ENCODE measurements at regions of chr10 and their contacts with region 1.

Region 1: DNA sequence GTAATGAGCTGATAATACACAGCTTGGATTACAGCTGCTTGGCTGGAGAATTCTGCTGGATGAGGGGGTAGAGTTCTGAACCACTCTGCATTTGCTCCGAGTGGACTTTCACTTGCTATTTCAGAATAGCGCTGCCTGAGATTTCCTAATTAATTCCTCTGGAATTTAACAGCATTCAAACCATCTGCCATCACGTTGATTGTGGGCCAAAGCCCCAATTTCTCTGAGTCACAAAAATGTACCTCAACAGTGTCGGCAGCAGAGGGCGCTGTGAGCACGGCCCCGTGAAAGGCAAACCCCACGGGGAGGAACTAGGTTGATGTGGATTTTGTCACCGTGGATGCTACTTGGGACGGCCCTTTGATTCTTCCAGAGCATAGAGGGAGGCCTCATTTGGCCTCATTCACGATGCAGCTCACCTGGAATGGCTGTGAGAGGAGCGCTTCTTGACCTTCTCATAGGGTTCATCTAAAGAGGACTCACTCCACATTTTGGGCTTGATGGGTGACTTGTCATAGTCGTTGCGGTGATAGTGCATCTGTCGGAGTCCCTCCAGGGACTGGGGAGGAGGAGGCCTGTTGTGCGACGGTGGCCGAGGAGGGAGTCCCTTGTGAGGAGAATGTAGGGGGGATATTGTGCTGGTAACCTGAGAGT is 73.3 kb downstream of the PRPF18 start:
- DNase-seq: no peak
- H3K4me3 ChIP-seq: peak overlapping the region in 1 of 4 donors; percentile 26
- H3K27ac ChIP-seq: peak overlapping the region; percentile 32 to 77 (median 74)
- H3K4me1 ChIP-seq: peaks cover 18 to 38% (median 21%) of the 10 kb centered on the region in 3 donors
- H3K27me3 ChIP-seq: no peaks in the 10 kb centered on the region
- CTCF ChIP-seq: peak; percentile 87 to 97 (median 91)
- POLR2A ChIP-seq: no peak

Region 2: DNA sequence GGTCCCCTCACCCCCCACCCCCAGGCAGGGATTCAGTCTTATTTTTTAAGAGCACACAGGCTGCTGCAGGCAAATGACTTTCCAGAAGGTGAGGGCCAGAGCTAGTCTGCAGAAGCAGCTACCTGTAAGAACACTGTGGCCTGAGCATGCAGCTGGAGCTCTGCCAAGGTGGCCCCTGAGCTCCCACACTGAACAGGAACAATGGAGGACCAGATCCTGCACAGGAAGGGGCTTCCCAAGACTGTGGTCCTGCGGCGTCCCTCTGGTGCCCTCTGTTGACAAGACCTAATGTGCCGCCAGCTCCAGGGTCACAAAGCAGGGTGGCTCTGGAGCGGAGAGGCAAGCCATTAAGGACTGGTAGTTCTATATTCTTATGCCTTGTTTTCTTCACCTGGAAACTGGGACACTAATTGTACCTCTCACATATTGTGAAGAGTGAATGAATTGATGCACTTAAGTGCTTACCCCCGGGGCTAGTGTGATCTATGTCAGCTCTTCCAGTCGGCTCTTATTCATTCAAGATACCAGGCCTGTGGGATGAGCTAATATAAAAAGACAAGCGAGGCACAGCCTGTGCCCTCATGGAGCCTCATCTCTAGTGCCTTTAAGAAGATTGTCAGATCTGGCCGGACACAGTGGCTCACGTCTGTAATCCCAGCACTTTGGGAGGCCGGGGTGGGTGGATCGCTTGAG is 123.2 kb before region 1 on chr10:
- intact Hi-C with region 1: no loop called
- DNase-seq: no peak
- H3K4me3 ChIP-seq: no peak overlapping the region
- H3K27ac ChIP-seq: no peak overlapping the region
- H3K4me1 ChIP-seq: no peaks in the 10 kb centered on the region
- H3K27me3 ChIP-seq: peaks cover 0 to 27% (median 0%) of the 10 kb centered on the region in 4 donors
- CTCF ChIP-seq: peak in 5 of 6 experiments; percentile 16 to 43 (median 32)
- POLR2A ChIP-seq: no peak

Region 3: DNA sequence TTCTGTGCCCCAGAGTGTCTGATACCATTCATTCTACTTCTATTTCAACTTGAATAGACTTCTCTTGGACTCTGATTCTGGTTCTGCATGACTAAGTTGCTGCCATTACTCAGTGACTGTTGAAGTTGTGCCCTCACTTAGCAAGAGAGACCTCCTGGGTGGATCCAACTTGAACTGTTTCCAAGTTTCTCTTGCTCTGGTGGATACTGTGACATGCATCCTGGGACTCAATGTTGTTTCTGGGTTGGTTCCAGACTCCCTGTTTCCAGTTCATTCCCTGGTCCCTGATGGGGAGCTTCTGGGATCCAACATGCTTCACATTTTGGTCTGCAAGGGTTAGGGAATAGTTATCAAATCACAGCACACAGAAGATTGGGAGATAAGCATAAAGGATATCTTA is 99.4 kb before region 1 on chr10:
- intact Hi-C with region 1: no loop called
- DNase-seq: no peak
- H3K4me3 ChIP-seq: no peak overlapping the region
- H3K27ac ChIP-seq: no peak overlapping the region
- H3K4me1 ChIP-seq: peaks cover 0 to 19% (median 0%) of the 10 kb centered on the region in 3 donors
- H3K27me3 ChIP-seq: no peaks in the 10 kb centered on the region
- CTCF ChIP-seq: no peak
- POLR2A ChIP-seq: no peak

Region 4: GRCh38 chr10:13776861-13777311 is 116.9 kb after region 1 on chr10:
- intact Hi-C with region 1: loop called (anchors 5 kb)
- DNase-seq: no peak
- H3K4me3 ChIP-seq: no peak overlapping the region
- H3K27ac ChIP-seq: no peak overlapping the region
- H3K4me1 ChIP-seq: peaks cover 0 to 46% (median 3%) of the 10 kb centered on the region in 3 donors
- H3K27me3 ChIP-seq: no peaks in the 10 kb centered on the region
- CTCF ChIP-seq: no peak
- POLR2A ChIP-seq: no peak